Activated CD4-positive, alpha-beta T cell treated with anti-CD3 and anti-CD28 coated beads for 36 hours (primary cell): ENCODE measurements at regions of chr10 and their contacts with region 1.

Region 1: GRCh38 chr10:91797874-91798648 is at the start of gene TNKS2:
- DNase-seq: peak; percentile 96
- ATAC-seq: peak; percentile 64
- H3K4me3 Mint-ChIP-seq: peak within 1 kb of the TSS; percentile 94
- H3K27ac Mint-ChIP-seq: peak within 1 kb of the TSS; percentile 99
- H3K4me1 Mint-ChIP-seq: peaks cover 50% of the 10 kb centered on the region
- H3K27me3 Mint-ChIP-seq: no peaks in the 10 kb centered on the region
- total RNA-seq, gene TNKS2: 32.0 to 35.7 TPM

Region 2: DNA sequence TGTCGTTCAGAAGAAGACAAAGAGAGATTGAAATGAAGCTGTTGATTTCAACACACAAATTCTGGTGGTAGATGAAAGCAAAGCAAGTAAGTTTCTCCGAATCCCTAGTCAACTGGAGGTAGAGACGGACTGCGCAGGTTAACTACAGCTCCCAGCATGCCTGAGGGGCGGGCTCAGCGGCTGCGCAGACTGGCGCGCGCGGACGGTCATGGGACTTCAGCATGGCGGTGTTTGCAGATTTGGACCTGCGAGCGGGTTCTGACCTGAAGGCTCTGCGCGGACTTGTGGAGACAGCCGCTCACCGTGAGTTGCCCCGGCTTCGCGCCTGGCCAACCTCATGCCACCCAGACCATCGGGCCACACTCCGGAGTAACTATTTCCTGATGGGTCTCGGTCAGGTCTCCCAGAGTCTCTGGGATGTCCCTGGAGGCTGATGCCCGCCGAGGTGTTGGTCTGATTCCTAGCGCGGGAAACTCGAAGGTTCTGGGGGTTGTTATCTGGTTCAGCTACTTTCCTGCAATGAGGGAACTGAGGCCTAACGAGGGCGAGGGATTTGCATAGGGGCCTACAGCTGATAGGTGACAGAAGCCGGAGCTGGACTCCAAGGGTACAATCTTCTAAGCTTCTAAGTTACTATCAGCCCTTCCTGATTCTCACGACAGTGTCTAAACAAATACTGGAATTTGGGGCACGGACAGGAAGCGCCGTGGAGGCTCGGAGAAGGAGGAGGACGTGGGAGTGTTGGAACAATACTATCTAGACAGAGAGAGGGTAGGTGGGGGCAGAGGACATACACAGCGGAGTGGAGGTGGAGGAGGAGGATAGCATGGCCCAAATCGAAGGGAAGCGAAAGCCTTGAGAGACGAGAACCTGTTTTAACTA is 926.1 kb before region 1 on chr10 and contains the start of gene RPP30:
- CTCF ChIA-PET with region 1: no interaction called
- POLR2A ChIA-PET with region 1: no interaction called
- intact Hi-C with region 1: loop called in 1 of 2 experiments (anchors 5 kb)
- DNase-seq: peak; percentile 92
- ATAC-seq: peak; percentile 93
- H3K4me3 Mint-ChIP-seq: peak within 1 kb of the TSS; percentile 89
- H3K27ac Mint-ChIP-seq: peak within 1 kb of the TSS; percentile 98
- H3K4me1 Mint-ChIP-seq: peaks cover 34% of the 10 kb centered on the region
- H3K27me3 Mint-ChIP-seq: peaks cover 17% of the 10 kb centered on the region
- total RNA-seq, gene RPP30: 103 to 115 TPM

Region 3: DNA sequence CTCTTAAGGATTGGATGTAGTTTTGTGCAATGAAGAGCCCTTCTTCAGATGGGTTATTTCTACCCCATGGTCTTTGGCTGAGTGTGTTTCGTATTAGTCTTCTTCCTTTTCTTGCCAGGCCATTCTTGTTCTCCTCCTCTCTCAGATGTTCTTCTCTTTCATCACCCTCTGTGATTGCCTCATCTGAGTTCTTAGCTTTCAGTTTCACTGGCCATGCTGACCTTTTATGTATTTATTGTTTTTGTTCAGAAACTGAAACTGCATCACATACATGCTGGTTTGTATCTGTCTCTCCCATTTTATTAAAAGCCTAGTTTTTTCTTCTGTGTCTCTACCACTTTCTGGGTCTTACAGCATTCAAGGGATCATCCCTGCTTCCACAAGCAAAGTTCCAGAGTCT is 599.3 kb before region 1 on chr10:
- CTCF ChIA-PET with region 1: no interaction called
- POLR2A ChIA-PET with region 1: no interaction called
- intact Hi-C with region 1: loop called in 1 of 2 experiments (anchors 5 kb)
- DNase-seq: peak; percentile 19
- ATAC-seq: peak; percentile 30
- H3K4me3 Mint-ChIP-seq: no peak overlapping the region
- H3K27ac Mint-ChIP-seq: peak overlapping the region; percentile 82
- H3K4me1 Mint-ChIP-seq: peaks cover 82% of the 10 kb centered on the region
- H3K27me3 Mint-ChIP-seq: no peaks in the 10 kb centered on the region

Region 4: DNA sequence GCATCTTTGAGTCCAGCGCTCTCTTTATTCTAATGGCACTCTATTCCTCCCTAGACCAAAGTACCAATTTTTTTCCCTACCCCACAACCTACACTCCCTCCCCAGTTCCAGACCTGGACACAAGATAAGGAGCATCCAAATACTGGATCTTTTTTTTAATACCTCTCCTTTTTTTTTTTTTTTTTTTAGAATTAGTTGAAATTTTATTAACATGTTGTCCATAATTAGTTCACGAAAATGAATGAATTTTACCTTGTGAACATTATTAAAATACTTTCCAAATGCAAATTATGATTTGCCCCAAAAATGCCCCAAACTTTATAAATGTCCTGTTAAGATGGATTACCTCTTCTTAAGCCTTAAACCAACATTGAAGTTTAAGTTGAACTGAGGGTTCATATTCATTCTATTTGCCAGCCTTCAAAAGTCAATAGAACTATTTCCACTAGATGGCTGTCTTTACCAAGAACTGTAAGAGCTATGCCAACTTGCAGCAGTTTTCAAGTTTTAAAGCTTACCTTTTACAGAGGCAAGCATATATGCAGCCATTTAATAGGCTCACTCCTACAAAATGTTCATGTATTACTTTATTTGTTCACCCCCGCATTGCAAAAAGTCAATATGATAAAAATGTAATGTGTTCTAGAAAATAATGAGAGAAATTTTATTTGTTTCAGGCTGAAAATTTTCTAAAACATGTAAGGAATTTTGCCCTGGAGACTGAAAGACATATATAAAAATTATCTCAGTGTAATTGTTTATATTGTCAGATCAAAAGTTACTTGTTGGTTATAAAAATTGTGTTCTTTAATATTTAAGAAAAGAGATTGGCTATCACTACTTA is 39.5 kb before region 1 on chr10:
- CTCF ChIA-PET with region 1: interaction called, 14 read pairs
- POLR2A ChIA-PET with region 1: no interaction called
- intact Hi-C with region 1: loop called (anchors 2 kb)
- DNase-seq: no peak
- ATAC-seq: peak; percentile 81
- H3K4me3 Mint-ChIP-seq: no peak overlapping the region
- H3K27ac Mint-ChIP-seq: no peak overlapping the region
- H3K4me1 Mint-ChIP-seq: peaks cover 3% of the 10 kb centered on the region
- H3K27me3 Mint-ChIP-seq: peaks cover 21% of the 10 kb centered on the region

Region 5: GRCh38 chr10:91923371-91924211 is 125.5 kb after region 1 on chr10 and contains the start of gene BTAF1:
- CTCF ChIA-PET with region 1: interaction called, 4 read pairs
- POLR2A ChIA-PET with region 1: interaction called, 4 read pairs
- intact Hi-C with region 1: loop called (anchors 1 kb)
- DNase-seq: peak; percentile 96
- ATAC-seq: peak; percentile 96
- H3K4me3 Mint-ChIP-seq: peak within 1 kb of the TSS; percentile 97
- H3K27ac Mint-ChIP-seq: peak within 1 kb of the TSS; percentile 99
- H3K4me1 Mint-ChIP-seq: peaks cover 37% of the 10 kb centered on the region
- H3K27me3 Mint-ChIP-seq: peaks cover 2% of the 10 kb centered on the region
- total RNA-seq, gene BTAF1: 59.0 to 59.4 TPM

Region 6: DNA sequence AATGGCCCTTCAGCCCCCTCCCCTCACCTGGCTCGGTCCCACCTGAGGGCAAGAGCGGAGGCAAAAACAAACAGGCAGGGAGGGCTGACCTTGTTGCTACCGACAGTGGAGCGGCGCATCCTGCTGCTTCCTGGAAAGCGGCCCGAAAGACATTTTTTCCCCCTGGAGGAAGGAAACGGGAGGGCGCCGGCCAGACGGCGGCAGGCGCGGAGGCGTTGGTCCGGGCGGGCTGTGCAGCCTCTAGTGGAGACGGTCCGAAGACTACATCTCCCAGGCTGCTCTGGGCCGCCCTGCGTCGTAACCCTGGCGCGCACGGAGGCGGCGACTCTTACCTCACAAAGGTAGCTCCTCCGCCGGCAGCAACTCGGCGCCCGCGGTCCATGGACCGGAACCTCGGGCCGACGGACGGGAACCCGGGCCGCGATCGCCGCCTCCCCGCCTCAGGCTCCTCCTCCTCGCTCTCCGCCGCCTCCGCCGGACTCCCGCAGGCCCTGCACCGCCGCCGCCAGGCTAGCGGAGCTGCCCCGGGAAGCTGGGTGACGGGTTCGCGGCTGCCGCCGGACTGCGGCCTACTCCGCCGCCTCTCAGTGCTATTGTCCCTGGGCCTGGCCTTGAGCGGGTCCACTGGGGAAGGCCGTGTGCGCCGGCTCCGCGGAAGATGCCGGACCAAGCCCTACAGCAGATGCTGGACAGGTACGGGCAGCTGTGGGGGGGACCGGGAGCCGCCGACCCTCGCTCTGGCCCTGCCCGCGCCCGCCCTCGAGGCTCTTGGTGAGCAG is 493.0 kb after region 1 on chr10 and contains the starts of genes CPEB3 and MARCHF5:
- CTCF ChIA-PET with region 1: no interaction called
- POLR2A ChIA-PET with region 1: no interaction called
- intact Hi-C with region 1: loop called in 1 of 2 experiments (anchors 1 kb)
- DNase-seq: peak; percentile 97
- ATAC-seq: peak; percentile 98
- H3K4me3 Mint-ChIP-seq: peak within 1 kb of the TSS; percentile 75
- H3K27ac Mint-ChIP-seq: peak within 1 kb of the TSS; percentile 80
- H3K4me1 Mint-ChIP-seq: peaks cover 21% of the 10 kb centered on the region
- H3K27me3 Mint-ChIP-seq: no peaks in the 10 kb centered on the region
- total RNA-seq, gene CPEB3: 1.4 to 1.8 TPM
- total RNA-seq, gene MARCHF5: 11.7 to 25.9 TPM

Region 7: DNA sequence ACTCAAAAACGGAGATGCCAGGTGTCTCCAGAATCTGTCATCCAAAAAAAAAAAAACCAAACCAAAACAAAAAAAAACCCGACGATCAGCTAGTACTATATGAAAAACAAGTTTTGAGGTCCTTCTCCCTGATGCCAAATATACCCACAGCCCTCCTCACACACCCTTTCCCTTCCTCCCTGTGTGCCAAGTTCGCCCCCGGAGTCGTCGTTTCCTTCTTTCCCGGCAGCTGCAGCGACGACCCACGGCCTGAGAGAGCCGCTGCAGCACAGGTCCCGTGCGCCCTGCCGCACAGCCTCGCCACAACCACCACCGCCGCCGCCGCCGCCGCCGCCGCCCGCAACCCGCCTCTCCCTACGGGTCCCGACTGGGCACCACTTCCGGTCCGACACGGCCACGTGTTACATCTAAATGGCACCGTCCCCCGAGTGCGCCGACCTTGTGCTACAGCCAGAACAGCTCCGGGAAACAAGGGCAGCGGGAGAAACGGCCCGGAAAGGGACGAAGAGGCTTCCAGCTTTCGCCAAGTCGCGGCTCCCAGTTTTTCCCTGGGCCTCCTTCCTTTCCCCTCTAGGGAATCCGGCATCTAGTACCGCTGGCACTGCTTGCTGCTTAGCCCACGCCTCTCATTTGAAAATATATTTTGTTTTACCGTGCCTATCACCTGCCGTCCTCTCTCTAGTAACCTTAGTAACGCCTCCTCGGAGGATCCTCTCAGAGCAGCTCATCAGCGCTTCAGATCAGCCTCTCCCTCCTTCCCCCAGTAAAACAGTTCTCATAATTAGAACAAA is 1904.3 kb after region 1 on chr10 and contains the start of gene FRA10AC1:
- CTCF ChIA-PET with region 1: no interaction called
- POLR2A ChIA-PET with region 1: no interaction called
- intact Hi-C with region 1: loop called in 1 of 2 experiments (anchors 5 kb)
- DNase-seq: peak; percentile 93
- ATAC-seq: peak; percentile 84
- H3K4me3 Mint-ChIP-seq: no peak within 1 kb of the TSS
- H3K27ac Mint-ChIP-seq: no peak within 1 kb of the TSS
- H3K4me1 Mint-ChIP-seq: peaks cover 29% of the 10 kb centered on the region
- H3K27me3 Mint-ChIP-seq: no peaks in the 10 kb centered on the region
- total RNA-seq, gene FRA10AC1: 18.9 to 29.4 TPM